Right ventricle myocardium inferior (tissue), 1 donor: ENCODE measurements at regions of chr17 and their contacts with region 1.

Region 1: DNA sequence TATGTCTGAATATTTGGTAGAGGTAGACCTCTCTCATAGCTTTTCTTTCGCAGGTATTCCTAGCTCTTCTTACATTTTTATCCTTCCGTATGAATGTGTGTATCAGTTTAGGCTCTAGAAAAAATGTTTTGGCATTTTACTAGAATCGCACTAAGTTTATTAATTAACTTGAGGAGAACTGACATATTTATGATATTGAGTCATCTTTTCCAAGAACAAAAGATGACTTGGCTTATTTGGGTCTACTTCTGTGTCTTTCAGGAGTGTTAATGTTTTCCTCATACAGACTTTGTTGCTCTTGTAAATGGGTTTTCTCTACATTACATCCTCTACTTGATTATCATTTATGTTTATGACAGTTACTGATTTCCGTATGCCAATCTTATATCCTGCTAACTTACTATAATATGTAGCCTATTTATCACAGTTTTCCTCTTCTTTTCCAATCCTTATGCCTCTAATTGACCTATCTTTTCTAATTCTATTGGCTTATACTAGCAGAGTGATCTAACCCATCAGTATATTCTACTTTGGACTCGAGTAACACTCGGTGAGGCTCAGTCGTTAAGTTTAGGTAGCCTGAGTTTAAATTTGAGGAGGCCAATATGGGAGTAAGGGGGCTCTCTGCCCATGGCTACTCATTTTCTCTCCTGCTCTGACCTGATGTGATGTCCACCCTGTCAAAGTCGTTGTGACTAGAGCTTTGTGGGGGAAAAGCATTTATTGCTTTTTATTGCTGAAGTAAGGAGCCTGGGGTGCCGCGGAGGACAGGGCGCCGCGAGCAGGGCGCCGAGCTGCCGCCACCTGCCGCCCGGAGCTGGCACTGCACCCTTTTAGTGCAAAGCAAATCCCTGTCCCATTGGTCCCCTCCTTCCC is 20.0 kb downstream of the ST6GALNAC1 start:
- DNase-seq: peak; percentile 92
- ATAC-seq: peak; percentile 82

Region 2: DNA sequence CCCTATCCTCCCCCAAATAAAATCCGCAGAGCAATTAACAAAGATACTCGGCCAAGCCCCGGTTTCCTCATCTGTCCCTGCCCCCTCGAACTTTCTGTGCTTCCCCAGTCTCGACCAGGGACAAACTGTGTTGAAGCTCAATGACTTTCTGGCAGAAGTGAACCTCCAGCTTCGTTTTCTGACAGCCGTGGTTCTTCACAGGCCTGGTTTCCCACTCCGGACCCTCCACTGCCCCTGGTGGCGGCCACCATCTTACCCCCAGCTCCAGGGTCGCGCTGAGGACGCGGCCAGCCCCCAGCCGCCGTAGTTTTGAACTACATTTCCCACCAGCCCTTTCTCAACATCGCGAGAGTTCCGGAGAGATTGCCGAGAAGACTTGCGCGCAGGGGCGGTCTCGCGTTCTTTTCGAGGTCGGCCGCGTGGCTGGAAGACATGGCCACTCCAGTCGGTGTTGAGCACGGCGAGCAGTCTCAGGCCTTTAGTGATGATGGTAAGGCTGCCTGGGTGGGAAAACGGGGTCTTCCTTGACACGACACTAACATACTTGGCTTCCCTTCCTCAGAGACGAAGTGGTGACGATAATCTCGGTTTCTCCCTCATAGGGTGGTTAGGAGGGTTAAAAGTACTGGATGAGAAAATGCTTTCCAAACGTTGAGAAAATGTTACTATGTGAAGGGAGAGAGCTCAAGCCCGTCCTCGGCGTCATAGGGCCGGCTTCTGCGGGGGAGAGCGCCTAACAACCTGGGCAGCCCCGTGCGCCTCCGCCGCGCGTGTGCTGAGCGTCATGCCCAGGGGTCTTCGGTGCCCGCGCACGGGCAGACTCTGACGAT is 65.9 kb before region 1 on chr17:
- intact Hi-C with region 1: loop called (anchors 5 kb)
- DNase-seq: peak; percentile 97
- ATAC-seq: peak; percentile 88